Heart left ventricle (tissue), 16 donors: ENCODE measurements at regions of chr17 and their contacts with region 1.

Region 1: DNA sequence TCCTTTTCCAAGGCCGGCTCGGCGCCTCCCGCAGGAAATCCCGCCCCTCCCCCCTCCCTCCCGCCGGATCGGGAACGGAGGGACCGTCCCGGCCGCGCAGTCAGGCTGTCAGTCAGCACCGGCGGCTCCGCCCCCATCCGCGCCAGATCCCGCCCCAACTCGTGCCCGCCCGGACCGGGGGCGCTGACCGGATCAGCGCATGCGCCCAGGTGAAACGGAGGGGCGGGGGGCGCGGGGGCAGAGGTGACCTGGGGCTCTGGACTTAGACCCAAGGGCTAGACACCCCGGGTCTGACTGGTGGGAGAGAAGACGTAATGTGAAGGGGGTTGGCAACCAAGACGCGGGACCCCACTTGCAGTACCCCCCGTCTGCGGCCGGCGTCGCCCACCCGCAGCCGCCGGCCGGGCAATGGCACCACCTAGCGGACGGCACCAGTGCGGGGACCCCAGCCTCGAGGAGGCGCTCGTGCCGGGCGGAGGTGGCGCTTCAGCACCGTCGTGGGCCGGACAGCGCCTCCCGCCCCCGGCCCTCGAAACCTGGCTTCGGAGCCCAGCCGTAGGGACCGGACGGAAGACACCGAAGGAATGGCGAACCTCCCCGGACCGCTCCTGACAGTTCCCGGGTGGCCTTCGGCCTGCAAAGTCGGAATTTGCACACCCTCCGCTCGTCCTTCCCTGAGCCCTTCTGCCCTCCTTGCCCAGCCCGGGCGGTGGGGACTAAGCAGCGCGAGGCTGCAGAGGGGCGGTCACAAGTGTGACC is at the start of gene CASKIN2:
- DNase-seq: peak; percentile 97 to 98 (median 98)
- ATAC-seq: peak; percentile 79 to 91 (median 90)
- H3K4me3 ChIP-seq: peak within 1 kb of the TSS; percentile 77 to 99 (median 93)
- H3K27ac ChIP-seq: peak within 1 kb of the TSS; percentile 86 to 98 (median 94)
- H3K4me1 ChIP-seq: peaks cover 3 to 58% (median 39%) of the 10 kb centered on the region in 12 donors
- H3K27me3 ChIP-seq: no peaks in the 10 kb centered on the region
- CTCF ChIP-seq: peak; percentile 92 to 99 (median 96)
- POLR2A ChIP-seq: no peak
- total RNA-seq, gene CASKIN2: 27.1 to 51.2 (median 39.3) TPM

Region 2: GRCh38 chr17:75289115-75289831 is 226.4 kb before region 1 on chr17 and contains the start of gene SLC25A19:
- intact Hi-C with region 1: loop called in 1 of 10 experiments (anchors 10 kb)
- DNase-seq: peak; percentile 98 to 99 (median 99)
- ATAC-seq: peak; percentile 99 to 100 (median 99)
- H3K4me3 ChIP-seq: peak within 1 kb of the TSS; percentile 57 to 96 (median 78)
- H3K27ac ChIP-seq: peak within 1 kb of the TSS; percentile 72 to 95 (median 89)
- H3K4me1 ChIP-seq: peaks cover 0 to 43% (median 4%) of the 10 kb centered on the region in 12 donors
- H3K27me3 ChIP-seq: no peaks in the 10 kb centered on the region
- CTCF ChIP-seq: peak in 5 of 12 donors; percentile 13 to 42 (median 30)
- POLR2A ChIP-seq: peak; percentile 75 to 99
- total RNA-seq, gene SLC25A19: 7.0 to 27.9 (median 11.7) TPM

Region 3: GRCh38 chr17:75430159-75430974 is 85.3 kb before region 1 on chr17:
- intact Hi-C with region 1: loop called (anchors 1 to 5 kb)
- DNase-seq: no peak
- ATAC-seq: no peak
- H3K4me3 ChIP-seq: no peak overlapping the region
- H3K27ac ChIP-seq: peak overlapping the region in 1 of 12 donors; percentile 73
- H3K4me1 ChIP-seq: peaks cover 0 to 20% (median 5%) of the 10 kb centered on the region in 12 donors
- H3K27me3 ChIP-seq: no peaks in the 10 kb centered on the region
- CTCF ChIP-seq: no peak
- POLR2A ChIP-seq: no peak

Region 4: GRCh38 chr17:75456417-75457046 is 59.1 kb before region 1 on chr17 and contains the start of gene TMEM94:
- intact Hi-C with region 1: loop called in 5 of 10 experiments (anchors 1 to 10 kb)
- DNase-seq: peak; percentile 95 to 97 (median 96)
- ATAC-seq: peak; percentile 98 to 99 (median 99)
- H3K4me3 ChIP-seq: peak within 1 kb of the TSS; percentile 80 to 96 (median 86)
- H3K27ac ChIP-seq: peak within 1 kb of the TSS; percentile 79 to 95 (median 90)
- H3K4me1 ChIP-seq: peaks cover 0 to 46% (median 25%) of the 10 kb centered on the region in 12 donors
- H3K27me3 ChIP-seq: no peaks in the 10 kb centered on the region
- CTCF ChIP-seq: no peak
- POLR2A ChIP-seq: peak in 1 of 2 donors; percentile 58
- total RNA-seq, gene TMEM94: 35.7 to 130 (median 52.7) TPM

Region 5: GRCh38 chr17:75589012-75589918 is 73.6 kb after region 1 on chr17:
- intact Hi-C with region 1: loop called in 8 of 10 experiments (anchors 2 to 10 kb)
- DNase-seq: peak; percentile 96 to 98 (median 98)
- ATAC-seq: peak; percentile 89 to 95 (median 90)
- H3K4me3 ChIP-seq: peak overlapping the region; percentile 34 to 92 (median 75)
- H3K27ac ChIP-seq: peak overlapping the region; percentile 85 to 98 (median 95)
- H3K4me1 ChIP-seq: peaks cover 0 to 29% (median 14%) of the 10 kb centered on the region in 12 donors
- H3K27me3 ChIP-seq: no peaks in the 10 kb centered on the region
- CTCF ChIP-seq: peak; percentile 20 to 89 (median 64)
- POLR2A ChIP-seq: peak in 1 of 2 donors; percentile 67

Region 6: DNA sequence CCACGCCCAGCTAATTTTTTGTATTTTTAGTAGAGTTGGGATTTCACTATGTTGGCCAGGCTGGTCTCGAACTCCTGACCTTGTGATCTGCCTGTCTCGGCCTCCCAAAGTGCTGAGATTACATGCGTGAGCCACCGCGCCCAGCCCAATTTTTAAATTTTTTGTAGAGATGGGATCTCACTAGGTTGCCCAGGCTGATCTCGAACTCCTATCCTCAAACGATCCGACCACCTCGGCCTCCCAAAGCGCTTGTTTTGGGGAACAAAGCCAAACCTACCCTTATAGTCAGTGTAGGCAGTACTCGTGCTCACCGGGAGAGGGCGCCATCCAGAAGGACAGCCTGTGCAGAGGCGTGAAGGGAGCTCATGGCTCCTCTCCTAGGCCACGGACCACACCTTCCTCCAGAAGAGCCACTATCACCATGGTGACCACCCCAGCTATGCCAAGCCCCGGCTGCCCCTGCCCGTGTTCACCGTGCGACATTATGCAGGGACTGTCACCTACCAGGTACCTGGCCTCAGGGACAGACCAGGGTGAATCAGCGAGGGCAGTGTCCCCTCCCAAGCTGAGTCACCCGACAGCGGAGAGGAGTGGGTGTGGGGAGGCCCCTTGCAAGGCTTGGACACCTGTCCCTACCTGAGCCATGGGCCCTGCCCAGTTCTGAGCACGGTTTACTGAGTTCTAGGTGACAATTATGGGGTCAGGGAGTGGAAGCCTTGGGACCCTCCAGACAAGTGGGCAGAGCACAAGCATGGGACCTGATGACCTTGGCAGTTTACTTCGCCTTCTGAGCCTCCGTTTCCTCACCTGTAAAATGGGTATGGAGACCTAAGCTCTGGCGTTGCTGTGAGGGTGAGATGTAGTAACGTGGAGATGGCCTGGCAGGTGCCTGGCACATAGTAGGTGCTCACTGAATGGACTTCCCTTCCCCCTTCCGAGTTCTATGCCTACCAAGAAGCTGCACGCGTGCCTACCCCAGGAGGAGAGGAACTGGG is 85.7 kb after region 1 on chr17:
- intact Hi-C with region 1: no loop called
- DNase-seq: peak in 3 of 5 donors; percentile 8 to 77 (median 29)
- ATAC-seq: peak; percentile 34 to 56 (median 52)
- H3K4me3 ChIP-seq: no peak overlapping the region
- H3K27ac ChIP-seq: no peak overlapping the region
- H3K4me1 ChIP-seq: peaks cover 0 to 6% (median 0%) of the 10 kb centered on the region in 12 donors
- H3K27me3 ChIP-seq: no peaks in the 10 kb centered on the region
- CTCF ChIP-seq: peak; percentile 45 to 67 (median 60)
- POLR2A ChIP-seq: no peak